Posterior vena cava (tissue), 2 donors: ENCODE measurements at regions of chr21 and their contacts with region 1.

Region 1: GRCh38 chr21:42818328-42818749 is 61.0 kb downstream of the WDR4 start:
- DNase-seq: peak; percentile 89

Region 2: DNA sequence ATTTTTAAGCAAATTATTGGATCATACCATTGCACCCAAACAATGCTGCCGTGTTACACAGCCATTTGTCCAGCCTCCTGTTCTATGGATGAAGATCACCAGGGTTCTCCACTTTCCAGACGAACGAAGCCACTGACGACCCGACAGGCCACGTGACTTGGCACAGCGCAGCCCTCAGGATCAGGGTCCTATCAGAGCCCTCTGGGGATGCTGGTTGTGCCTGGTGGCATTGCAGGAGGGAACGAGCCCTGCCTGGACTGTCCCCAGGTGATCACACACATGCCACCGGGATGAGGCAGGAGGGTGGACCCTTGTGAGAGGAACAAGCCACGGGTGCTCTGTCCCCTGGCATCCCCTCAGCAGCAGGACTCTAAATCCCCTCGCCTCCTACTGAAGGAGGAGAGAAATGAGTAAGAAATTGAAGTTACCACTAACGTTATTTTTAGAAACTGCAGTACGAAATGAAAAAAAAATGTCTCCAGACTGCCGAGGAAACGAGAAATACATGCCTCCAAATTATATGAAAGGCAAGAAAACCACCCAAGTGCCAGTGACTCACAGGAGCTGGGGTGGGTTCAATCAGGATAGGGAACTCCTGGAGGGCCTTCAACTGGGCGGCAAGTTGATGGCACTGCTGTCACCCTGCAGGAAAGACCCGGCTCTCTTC is 223.6 kb before region 1 on chr21:
- intact Hi-C with region 1: loop called in 1 of 2 experiments (anchors 5 kb)
- DNase-seq: peak; percentile 44

Region 3: DNA sequence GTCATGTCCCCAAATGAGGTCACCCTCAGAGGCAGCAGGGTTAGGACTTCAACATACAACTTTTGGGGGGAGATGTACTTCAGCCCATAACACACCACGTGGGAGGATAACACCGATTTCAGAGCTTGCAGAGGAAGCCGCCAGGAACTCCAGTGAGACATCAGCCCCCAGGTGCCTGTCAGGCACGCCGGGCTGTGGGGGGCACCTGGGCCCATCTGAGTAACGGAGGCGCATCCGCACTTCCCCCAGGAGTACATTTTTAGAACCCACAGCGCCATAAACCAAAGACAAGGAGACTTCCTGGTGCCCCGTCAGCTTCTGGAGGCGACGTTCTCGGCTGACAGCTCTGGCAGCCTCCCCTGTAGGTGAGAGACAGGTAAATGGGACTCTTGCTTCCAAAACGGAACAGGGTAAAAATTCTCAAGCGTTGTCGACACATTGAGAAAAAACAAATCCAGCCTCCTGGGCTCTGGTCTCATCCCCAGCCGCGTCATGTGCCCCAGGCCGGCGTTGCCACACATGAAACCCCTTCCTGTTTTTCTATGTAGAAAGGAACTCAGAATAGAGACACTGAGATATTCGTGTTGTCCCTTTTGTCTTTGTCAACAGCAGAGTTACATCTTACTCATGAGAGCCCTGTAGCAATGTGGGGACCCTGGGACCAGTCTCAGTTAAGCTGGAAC is 71.6 kb before region 1 on chr21:
- intact Hi-C with region 1: no loop called
- DNase-seq: peak; percentile 93

Region 4: GRCh38 chr21:42777757-42778344 is 40.5 kb before region 1 on chr21:
- intact Hi-C with region 1: loop called in 1 of 2 experiments (anchors 2 kb)
- DNase-seq: no peak